T-cell (primary cell): ENCODE measurements at regions of chr19 and their contacts with region 1.

Region 1: DNA sequence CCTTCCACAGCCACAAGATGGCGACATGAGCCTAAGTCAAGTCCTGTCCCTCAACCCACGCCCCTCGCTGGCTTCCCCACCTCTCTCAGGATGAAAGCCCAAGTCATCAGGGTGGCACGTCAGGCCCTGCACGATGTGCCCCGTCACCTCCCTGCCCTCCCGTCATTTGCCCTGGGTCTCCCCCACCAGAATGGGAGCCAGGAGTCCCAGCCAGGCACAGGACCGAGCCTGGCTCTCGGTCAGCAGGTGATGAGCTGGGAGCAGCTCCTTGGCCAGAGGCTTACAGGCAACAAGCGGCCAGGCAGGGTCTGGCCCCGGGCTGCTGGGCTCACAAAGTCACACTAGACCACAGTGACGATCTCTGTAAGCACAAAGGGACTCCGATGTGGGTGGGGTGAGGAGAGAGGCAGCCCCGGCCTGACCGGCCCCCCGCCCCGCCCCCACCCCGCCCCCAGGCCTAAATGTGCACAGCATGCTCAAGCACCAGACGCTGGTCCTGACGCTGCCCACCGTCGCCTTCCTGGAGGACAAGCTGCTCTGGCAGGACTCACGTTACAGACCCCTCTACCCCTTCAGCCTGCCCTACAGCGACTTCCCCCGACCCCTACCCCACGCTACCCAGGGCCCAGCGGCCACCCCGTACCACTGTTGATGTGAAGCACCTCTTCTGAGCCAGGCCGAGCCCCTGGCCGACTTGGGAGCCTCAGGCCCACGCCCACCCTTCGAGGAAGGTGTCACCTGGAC is 7.3 kb downstream of the MRPL4 start:
- DNase-seq: peak; percentile 62 to 94 (median 84)
- ATAC-seq: peak; percentile 75 to 92 (median 78)
- H3K4me3 ChIP-seq: no peak overlapping the region
- H3K4me3 Mint-ChIP-seq: no peak overlapping the region
- H3K27ac ChIP-seq: no peak overlapping the region
- H3K27ac Mint-ChIP-seq: no peak overlapping the region
- H3K4me1 ChIP-seq: peaks cover 0 to 18% of the 10 kb centered on the region in 2 experiments
- H3K4me1 Mint-ChIP-seq: peaks cover under 1 to 8% (median 6%) of the 10 kb centered on the region in 3 donors
- H3K27me3 ChIP-seq: no peaks in the 10 kb centered on the region
- H3K27me3 Mint-ChIP-seq: no peaks in the 10 kb centered on the region

Region 2: GRCh38 chr19:10380313-10381102 is 121.2 kb after region 1 on chr19 and contains the start of gene TYK2:
- CTCF ChIA-PET with region 1: interaction called, 5 to 10 read pairs
- POLR2A ChIA-PET with region 1: no interaction called
- DNase-seq: peak; percentile 88 to 98 (median 93)
- ATAC-seq: peak; percentile 94 to 97 (median 96)
- H3K4me3 ChIP-seq: peak within 1 kb of the TSS; percentile 95 to 97
- H3K4me3 Mint-ChIP-seq: peak within 1 kb of the TSS; percentile 85 to 95 (median 94)
- H3K27ac ChIP-seq: peak within 1 kb of the TSS; percentile 88
- H3K27ac Mint-ChIP-seq: peak within 1 kb of the TSS; percentile 84 to 87
- H3K4me1 ChIP-seq: peaks cover 13 to 28% of the 10 kb centered on the region in 2 experiments
- H3K4me1 Mint-ChIP-seq: peaks cover 22 to 26% (median 25%) of the 10 kb centered on the region in 3 donors
- H3K27me3 ChIP-seq: peaks cover 0 to 3% of the 10 kb centered on the region in 2 experiments
- H3K27me3 Mint-ChIP-seq: no peaks in the 10 kb centered on the region
- total RNA-seq, gene TYK2: 277 to 346 (median 323) TPM

Region 3: DNA sequence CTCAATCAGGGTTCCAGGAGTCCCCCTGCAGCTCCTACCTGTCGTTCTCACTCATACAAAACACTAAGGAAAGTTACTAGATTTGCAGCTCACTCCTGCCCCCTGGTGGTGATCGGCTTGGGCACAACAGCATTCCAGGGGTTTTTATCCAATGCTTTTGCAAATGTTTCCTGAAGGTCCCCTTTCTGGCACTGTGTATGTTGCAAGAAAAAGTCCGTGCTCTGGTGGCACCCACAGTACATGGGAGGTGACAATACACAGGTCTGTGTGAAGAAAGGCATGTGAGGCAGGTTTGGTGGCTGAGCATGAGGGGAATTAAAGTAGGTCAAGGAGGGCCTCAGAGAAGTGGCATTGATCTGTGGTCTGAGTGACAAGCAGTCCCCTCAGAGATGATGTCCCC is 129.6 kb after region 1 on chr19:
- CTCF ChIA-PET with region 1: interaction called, 20 to 37 read pairs
- POLR2A ChIA-PET with region 1: interaction called in 1 of 2 experiments, 7 read pairs
- DNase-seq: peak; percentile 37 to 90 (median 76)
- ATAC-seq: peak; percentile 54 to 61 (median 59)
- H3K4me3 ChIP-seq: no peak overlapping the region
- H3K4me3 Mint-ChIP-seq: no peak overlapping the region
- H3K27ac ChIP-seq: no peak overlapping the region
- H3K27ac Mint-ChIP-seq: peak overlapping the region; percentile 49 to 55
- H3K4me1 ChIP-seq: no peaks in the 10 kb centered on the region
- H3K4me1 Mint-ChIP-seq: peaks cover 0 to 5% (median 0%) of the 10 kb centered on the region in 3 donors
- H3K27me3 ChIP-seq: peaks cover 0 to 3% of the 10 kb centered on the region in 2 experiments
- H3K27me3 Mint-ChIP-seq: no peaks in the 10 kb centered on the region